HCT116 (cell line): ENCODE measurements at regions of chr2 and their contacts with region 1.

Region 1: GRCh38 chr2:210002158-210003157 is at the start of gene RPE:
- DNase-seq: peak; percentile 87
- ATAC-seq: peak; percentile 95
- H3K4me3 ChIP-seq: peak within 1 kb of the TSS; percentile 73 to 80
- H3K27ac ChIP-seq: peak within 1 kb of the TSS; percentile 66
- H3K4me1 ChIP-seq: peaks cover 4 to 19% of the 10 kb centered on the region in 2 experiments; a peak in 3 of 4 replicates
- H3K27me3 ChIP-seq: no peaks in the 10 kb centered on the region
- CTCF ChIP-seq: no peak
- POLR2A ChIP-seq: peak; percentile 91
- RAD21 ChIP-seq: no peak
- total RNA-seq, gene RPE: 67.6 TPM

Region 2: DNA sequence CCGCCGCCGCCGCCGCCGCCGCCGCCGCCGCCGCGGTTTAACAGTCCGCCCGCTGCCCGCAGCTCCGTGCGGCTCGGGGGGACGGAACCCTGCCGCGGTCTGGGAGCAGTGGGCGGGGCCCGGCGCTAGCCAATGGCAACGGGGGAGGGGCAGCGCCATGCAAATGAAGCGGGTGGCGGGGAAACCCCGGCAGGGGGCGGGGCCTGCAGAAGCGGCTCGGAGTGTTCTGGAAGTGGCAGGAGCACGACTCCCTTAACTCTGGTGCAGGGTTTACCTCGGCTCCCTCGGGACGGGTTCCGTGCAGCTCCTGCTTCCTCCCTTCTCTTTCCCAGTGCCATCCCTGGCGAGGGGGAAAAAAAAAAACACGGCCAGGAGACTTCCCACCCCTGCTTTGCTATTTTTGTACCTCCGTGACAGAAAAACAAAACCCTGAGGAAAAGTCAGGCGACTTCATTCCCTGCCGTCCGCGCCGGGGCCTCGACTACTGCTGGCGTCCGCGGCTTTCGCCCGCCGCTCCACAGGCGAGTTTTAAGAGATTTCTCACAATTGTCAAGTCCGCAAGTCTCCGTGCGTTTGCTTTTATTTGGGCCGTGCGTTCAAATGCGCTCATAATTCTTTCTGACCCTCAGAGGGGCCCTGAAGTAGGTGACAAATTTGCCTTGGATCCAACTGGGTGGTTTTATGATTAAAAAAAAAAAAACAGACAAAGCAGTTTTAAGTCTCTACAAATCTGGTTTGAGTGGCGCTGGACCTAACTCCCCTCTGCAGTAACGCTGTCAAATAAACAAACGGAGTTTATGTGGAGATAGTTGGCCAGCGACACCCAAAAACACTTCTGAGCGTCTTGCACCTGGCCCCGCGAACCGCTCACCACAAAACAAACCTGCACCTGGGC is 169.1 kb after region 1 on chr2 and contains the start of gene KANSL1L:
- CTCF ChIA-PET with region 1: no interaction called
- POLR2A ChIA-PET with region 1: no interaction called
- RAD21 ChIA-PET with region 1: no interaction called
- intact Hi-C with region 1: loop called (anchors 5 kb)
- DNase-seq: peak; percentile 88
- ATAC-seq: peak; percentile 89
- H3K4me3 ChIP-seq: peak within 1 kb of the TSS; percentile 68 to 72
- H3K27ac ChIP-seq: peak within 1 kb of the TSS; percentile 82
- H3K4me1 ChIP-seq: peaks cover 21 to 43% of the 10 kb centered on the region in 2 experiments
- H3K27me3 ChIP-seq: no peaks in the 10 kb centered on the region
- CTCF ChIP-seq: no peak
- POLR2A ChIP-seq: no peak
- RAD21 ChIP-seq: no peak
- total RNA-seq, gene KANSL1L: 6.7 TPM

Region 3: DNA sequence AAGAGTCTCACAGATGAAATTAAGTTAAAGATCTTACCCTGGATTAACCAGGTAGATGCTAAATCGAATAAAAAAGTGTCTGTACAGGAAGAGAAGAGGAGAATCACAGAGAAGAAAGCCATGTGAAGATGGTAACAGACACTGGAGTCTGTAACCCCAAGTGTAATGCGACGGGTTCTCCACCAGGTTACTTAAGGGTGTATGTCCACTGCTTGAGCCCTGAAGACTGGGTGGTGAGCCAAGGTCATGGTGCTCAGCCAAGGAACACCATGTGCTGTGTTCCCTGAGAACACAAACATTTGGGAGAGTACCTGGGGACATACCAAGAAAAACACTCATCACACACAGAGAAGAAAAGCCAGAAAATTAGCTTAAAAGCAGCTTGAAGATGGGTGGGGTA is 231.0 kb after region 1 on chr2:
- CTCF ChIA-PET with region 1: no interaction called
- POLR2A ChIA-PET with region 1: no interaction called
- RAD21 ChIA-PET with region 1: no interaction called
- intact Hi-C with region 1: no loop called
- DNase-seq: no peak
- ATAC-seq: no peak; the same call in 1 of the 2 replicates
- H3K4me3 ChIP-seq: no peak overlapping the region
- H3K27ac ChIP-seq: no peak overlapping the region
- H3K4me1 ChIP-seq: no peaks in the 10 kb centered on the region
- H3K27me3 ChIP-seq: no peaks in the 10 kb centered on the region
- CTCF ChIP-seq: no peak
- POLR2A ChIP-seq: no peak
- RAD21 ChIP-seq: no peak